Ovary (tissue), 10 donors: ENCODE measurements at regions of chr12 and their contacts with region 1.

Region 1: DNA sequence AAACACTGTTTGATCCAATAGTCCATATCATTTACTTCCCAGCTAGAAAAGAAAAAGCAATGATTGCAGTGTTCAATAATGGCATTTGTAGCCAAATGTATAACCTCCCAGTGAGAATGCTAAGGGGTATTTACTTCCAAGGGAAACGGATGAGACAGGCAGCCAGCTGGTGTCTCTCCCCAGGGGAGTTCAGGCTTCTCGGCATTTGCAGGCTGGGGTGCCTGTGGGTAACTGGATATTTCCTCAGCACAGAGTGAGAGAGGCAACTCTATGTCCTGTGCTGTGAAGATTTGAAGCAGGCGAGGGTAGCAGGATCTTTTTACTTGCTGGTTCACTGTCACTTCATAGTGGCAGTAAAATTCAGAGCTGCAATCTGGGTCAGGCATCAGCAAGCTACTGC is 1455.6 kb upstream of the TMEM132C start:
- DNase-seq: no peak
- H3K4me3 ChIP-seq: no peak overlapping the region
- H3K27ac ChIP-seq: no peak overlapping the region
- H3K4me1 ChIP-seq: no peaks in the 10 kb centered on the region
- H3K27me3 ChIP-seq: no peaks in the 10 kb centered on the region
- CTCF ChIP-seq: no peak
- EP300 ChIP-seq: no peak
- POLR2A ChIP-seq: no peak

Region 2: GRCh38 chr12:126636821-126637220 is 174.6 kb before region 1 on chr12:
- intact Hi-C with region 1: no loop called
- DNase-seq: no peak
- H3K4me3 ChIP-seq: no peak overlapping the region
- H3K27ac ChIP-seq: no peak overlapping the region
- H3K4me1 ChIP-seq: no peaks in the 10 kb centered on the region
- H3K27me3 ChIP-seq: no peaks in the 10 kb centered on the region
- CTCF ChIP-seq: no peak
- EP300 ChIP-seq: no peak
- POLR2A ChIP-seq: no peak

Region 3: DNA sequence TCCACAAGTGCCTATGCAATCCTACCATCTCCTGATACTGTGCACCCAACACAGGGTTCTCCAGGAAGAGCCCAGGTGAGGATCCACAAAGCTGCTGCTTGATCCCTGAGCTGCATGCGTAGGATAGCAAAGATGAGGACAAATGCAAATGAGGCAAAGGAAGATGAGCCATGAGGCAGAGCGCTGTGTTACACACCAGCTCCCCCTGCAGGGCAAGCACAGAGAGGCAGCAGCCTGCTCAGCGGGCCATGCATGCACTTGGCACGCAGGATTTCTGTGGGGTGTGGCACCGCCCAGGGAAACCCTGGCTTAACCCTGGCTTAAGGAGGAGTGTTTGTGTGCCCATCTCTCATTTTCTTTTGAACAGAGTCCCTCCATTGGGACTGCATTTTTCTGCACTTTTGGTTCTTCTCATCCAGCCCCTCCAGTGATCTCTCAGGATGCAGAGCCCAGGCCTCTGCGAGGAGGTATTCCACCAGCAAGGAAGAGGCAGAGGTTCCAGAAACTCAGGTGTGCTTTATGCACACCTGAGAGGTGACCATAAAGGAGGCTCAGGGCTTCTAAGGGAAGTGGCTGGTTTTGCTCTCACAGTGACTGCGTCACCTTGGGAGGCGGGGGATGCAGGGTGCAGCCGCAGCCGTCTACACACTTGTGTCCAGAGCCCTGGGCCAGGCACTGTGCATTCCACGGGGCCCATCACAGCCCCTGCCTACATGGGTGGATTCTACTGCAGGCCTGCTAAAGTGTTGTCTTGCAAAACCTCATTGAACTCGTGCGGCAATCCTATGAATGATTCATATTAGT is 482.3 kb after region 1 on chr12:
- intact Hi-C with region 1: loop called in 1 of 4 experiments (anchors 1 kb)
- DNase-seq: peak in 1 of 5 donors; percentile 40
- H3K4me3 ChIP-seq: no peak overlapping the region
- H3K27ac ChIP-seq: no peak overlapping the region
- H3K4me1 ChIP-seq: no peaks in the 10 kb centered on the region
- H3K27me3 ChIP-seq: no peaks in the 10 kb centered on the region
- CTCF ChIP-seq: no peak
- EP300 ChIP-seq: no peak
- POLR2A ChIP-seq: no peak